ENCODE measurements at regions of chr13 and their contacts with region 1.

Region 1: GRCh38 chr13:24097064-24097463 is 63.5 kb upstream of the SPATA13 start:
- DNase-seq: peak; percentile 69
- H3K4me3 Mint-ChIP-seq: no peak overlapping the region
- H3K27ac Mint-ChIP-seq: peak overlapping the region; percentile 65
- H3K4me1 Mint-ChIP-seq: peaks cover 17% of the 10 kb centered on the region
- H3K27me3 Mint-ChIP-seq: peaks cover 6% of the 10 kb centered on the region

Region 2: GRCh38 chr13:23833733-23834626 is 263.1 kb before region 1 on chr13:
- CTCF ChIA-PET with region 1: no interaction called
- intact Hi-C with region 1: no loop called
- DNase-seq: no peak
- H3K4me3 Mint-ChIP-seq: no peak overlapping the region
- H3K27ac Mint-ChIP-seq: no peak overlapping the region
- H3K4me1 Mint-ChIP-seq: no peaks in the 10 kb centered on the region
- H3K27me3 Mint-ChIP-seq: no peaks in the 10 kb centered on the region

Region 3: GRCh38 chr13:24122569-24122968 is 25.5 kb after region 1 on chr13:
- CTCF ChIA-PET with region 1: no interaction called
- intact Hi-C with region 1: loop called (anchors 1 kb)
- DNase-seq: no peak
- H3K4me3 Mint-ChIP-seq: no peak overlapping the region
- H3K27ac Mint-ChIP-seq: no peak overlapping the region
- H3K4me1 Mint-ChIP-seq: peaks cover 17% of the 10 kb centered on the region
- H3K27me3 Mint-ChIP-seq: peaks cover 23% of the 10 kb centered on the region